Astrocyte of the cerebellum (primary cell): ENCODE measurements at regions of chr10 and their contacts with region 1.

Region 1: DNA sequence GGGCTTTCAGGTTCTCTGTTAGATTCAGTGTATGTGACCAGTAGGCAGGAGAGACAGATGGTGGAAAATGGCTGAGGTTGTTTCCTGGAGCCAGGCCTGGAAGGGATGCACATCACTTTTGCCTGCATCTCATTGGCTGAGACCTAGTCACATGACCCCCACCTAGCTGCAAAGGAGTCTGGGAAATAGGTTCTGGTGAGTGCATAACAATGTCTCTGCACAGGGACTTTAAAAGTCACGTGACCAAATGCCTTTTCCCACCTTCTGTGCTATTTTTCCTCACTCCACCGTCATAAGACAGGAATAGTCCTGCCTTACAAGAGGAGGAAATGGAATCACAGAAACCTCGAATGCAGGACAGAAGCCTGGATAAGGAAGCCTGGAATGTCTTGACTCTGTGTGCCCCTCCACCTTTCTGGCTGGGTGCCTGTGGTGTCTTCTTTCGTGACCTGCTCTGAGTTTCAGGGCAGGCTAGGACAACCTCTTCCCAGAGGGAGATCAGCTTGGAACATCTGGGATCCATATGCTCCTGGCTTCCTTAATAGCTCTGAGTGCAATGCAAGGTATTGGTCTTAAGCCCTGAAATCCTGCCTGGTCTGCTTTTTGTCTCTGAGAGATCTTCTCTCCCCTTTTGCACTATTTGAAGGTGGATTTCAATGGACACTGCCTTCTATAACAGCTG is 139.9 kb upstream of the ZNF438 start:
- DNase-seq: no peak
- H3K4me3 ChIP-seq: no peak overlapping the region
- CTCF ChIP-seq: no peak

Region 2: GRCh38 chr10:31209478-31209877 is 37.9 kb after region 1 on chr10:
- in situ Hi-C with region 1: loop called (anchors 5 kb)
- DNase-seq: no peak
- H3K4me3 ChIP-seq: no peak overlapping the region
- CTCF ChIP-seq: no peak

Region 3: GRCh38 chr10:31278279-31278941 is 106.9 kb after region 1 on chr10:
- in situ Hi-C with region 1: loop called (anchors 5 kb)
- DNase-seq: no peak
- H3K4me3 ChIP-seq: no peak overlapping the region
- CTCF ChIP-seq: no peak